ENCODE measurements at regions of chr4 and their contacts with region 1.

Region 1: DNA sequence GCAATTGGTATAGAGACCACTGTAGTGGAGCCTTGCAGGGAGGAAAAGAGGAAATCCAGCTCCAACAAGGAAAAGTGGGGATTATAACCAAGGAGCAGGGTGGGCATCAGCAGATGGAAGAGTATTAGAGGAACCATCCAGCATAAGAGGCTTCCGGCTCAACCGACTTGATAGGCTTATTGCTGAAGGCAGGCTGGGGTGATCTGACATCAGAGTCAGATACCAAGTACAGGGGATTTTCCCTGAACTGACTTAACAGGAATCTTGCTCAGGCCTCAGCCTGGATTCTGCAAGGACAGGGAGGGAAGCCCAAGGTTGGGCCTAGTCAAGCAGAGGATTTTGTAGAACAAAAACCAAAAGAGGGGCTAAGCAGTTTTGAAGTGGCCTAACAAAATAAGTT is 129.6 kb downstream of the DCLK2 start:
- DNase-seq: no peak
- ATAC-seq: no peak
- H3K4me3 ChIP-seq: no peak overlapping the region
- H3K4me3 Mint-ChIP-seq: no peak overlapping the region
- H3K27ac ChIP-seq: no peak overlapping the region
- H3K27ac Mint-ChIP-seq: no peak overlapping the region
- H3K4me1 ChIP-seq: no peaks in the 10 kb centered on the region
- H3K4me1 Mint-ChIP-seq: no peaks in the 10 kb centered on the region
- H3K27me3 ChIP-seq: no peaks in the 10 kb centered on the region
- H3K27me3 Mint-ChIP-seq: peaks cover 4 to 13% of the 10 kb centered on the region in 2 donors

Region 2: DNA sequence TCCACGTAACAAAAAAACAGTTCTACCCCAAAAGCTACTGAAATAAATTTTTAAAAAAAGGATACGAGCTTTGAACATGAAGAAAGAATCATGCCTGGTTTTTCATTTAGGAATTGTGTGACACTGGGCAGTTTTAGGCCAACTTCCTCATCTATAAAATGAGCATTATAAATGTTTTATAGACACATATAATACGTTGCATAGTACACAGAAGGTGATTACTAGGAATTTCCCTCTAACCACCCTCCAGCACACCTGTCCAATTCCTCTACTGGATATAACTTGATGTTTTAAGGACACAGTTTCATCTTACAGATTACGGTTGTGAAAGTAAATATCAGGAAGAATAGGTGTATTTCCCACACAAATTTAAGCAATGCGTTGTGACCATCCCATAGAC is 306.7 kb before region 1 on chr4:
- CTCF ChIA-PET with region 1: no interaction called
- POLR2A ChIA-PET with region 1: no interaction called
- DNase-seq: no peak
- ATAC-seq: no peak
- H3K4me3 ChIP-seq: no peak overlapping the region
- H3K4me3 Mint-ChIP-seq: no peak overlapping the region
- H3K27ac ChIP-seq: no peak overlapping the region
- H3K27ac Mint-ChIP-seq: no peak overlapping the region
- H3K4me1 ChIP-seq: no peaks in the 10 kb centered on the region
- H3K4me1 Mint-ChIP-seq: no peaks in the 10 kb centered on the region
- H3K27me3 ChIP-seq: no peaks in the 10 kb centered on the region
- H3K27me3 Mint-ChIP-seq: peaks cover 0 to 5% of the 10 kb centered on the region in 2 donors

Region 3: GRCh38 chr4:151238477-151238876 is 1030.6 kb after region 1 on chr4:
- CTCF ChIA-PET with region 1: no interaction called
- POLR2A ChIA-PET with region 1: interaction called in 1 of 2 experiments, 13 read pairs
- DNase-seq: no peak
- ATAC-seq: no peak
- H3K4me3 ChIP-seq: no peak overlapping the region
- H3K4me3 Mint-ChIP-seq: no peak overlapping the region
- H3K27ac ChIP-seq: no peak overlapping the region
- H3K27ac Mint-ChIP-seq: no peak overlapping the region
- H3K4me1 ChIP-seq: no peaks in the 10 kb centered on the region
- H3K4me1 Mint-ChIP-seq: no peaks in the 10 kb centered on the region
- H3K27me3 ChIP-seq: peaks cover 0 to 6% of the 10 kb centered on the region in 2 experiments
- H3K27me3 Mint-ChIP-seq: peaks cover 12 to 22% of the 10 kb centered on the region in 2 donors

Measured in T-cell (primary cell).